Cardiac septum (tissue), 1 donor: ENCODE measurements at regions of chr1 and their contacts with region 1.

Region 1: DNA sequence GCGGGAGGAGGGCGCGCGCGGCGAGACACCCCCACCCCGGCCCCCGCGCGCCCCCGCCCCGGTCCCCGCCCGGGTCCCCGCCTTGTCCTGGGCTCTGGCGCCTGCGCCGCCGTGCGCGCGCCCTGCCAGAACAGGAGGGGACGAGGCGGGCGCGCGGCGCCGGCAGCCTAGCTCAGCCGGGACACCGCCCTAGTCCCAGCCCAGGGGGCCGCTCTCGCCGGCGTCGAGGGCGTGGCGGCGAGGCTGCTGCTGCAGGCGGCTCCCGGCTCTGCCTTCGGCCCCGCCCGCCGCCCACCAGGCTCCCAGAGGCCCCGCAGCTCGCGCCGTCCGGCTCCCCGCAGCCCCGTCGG is at the start of gene RCAN3:
- DNase-seq: peak; percentile 87
- total RNA-seq, gene RCAN3: 5.1 TPM

Region 2: DNA sequence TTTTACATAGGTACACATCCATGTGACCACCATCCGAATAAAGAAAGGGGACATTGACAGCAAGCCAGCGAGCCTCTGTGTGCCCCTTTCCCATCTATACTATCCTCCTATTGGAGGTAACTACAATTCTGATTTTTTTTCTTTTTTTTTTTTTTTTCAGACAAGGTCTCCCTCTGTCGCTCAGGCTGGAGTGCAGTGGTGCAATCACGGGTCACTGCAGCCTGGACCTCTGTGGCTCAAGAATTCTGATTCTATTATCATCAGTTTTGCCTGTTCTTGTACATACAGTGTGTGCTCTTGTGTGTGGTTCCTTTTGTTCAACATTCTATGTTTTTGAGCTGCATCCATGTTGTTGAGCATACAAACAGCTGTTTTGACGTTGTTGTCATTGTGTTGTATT is 466.6 kb before region 1 on chr1:
- intact Hi-C with region 1: no loop called
- DNase-seq: no peak

Region 3: GRCh38 chr1:24415334-24415909 is 87.3 kb before region 1 on chr1 and contains the start of gene NIPAL3:
- intact Hi-C with region 1: loop called (anchors 5 kb)
- DNase-seq: peak; percentile 99
- total RNA-seq, gene NIPAL3: 21.3 TPM